Naive thymus-derived CD4-positive, alpha-beta T cell (primary cell): ENCODE measurements at regions of chr5 and their contacts with region 1.

Region 1: DNA sequence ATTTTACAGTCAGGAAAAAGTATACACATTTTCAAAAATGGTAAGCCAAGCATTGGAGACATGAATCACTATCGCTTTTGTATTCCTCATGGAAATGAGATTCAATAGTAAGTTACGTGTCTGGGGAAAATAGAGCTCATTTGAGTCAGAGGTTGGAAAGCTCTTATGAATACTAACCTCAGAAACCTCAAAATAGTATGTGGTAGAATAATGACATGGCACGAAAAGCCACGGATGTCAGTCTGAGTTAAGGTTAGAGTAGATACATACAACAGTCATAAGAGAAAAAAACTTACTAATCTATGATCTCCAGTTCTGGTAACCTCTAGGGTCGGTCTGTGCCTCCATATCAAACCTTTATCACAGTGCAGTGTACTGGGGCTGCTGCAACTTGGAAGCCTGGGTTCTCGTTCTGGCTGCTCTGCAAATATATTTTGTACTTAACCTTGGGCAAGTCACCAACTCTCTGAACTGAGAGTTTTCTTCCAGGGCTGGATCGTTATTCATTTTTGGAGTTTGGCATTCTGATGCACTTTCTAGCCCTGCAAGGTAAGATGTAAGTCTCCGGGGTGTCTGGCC is 31.8 kb downstream of the MAP1B start:
- DNase-seq: no peak
- ATAC-seq: peak; percentile 66
- H3K4me3 ChIP-seq: no peak overlapping the region
- H3K4me3 Mint-ChIP-seq: no peak overlapping the region
- H3K27ac ChIP-seq: no peak overlapping the region
- H3K27ac Mint-ChIP-seq: no peak overlapping the region
- H3K4me1 ChIP-seq: no peaks in the 10 kb centered on the region
- H3K4me1 Mint-ChIP-seq: peaks cover 0 to 10% (median 4%) of the 10 kb centered on the region in 7 donors
- H3K27me3 ChIP-seq: no peaks in the 10 kb centered on the region
- H3K27me3 Mint-ChIP-seq: peaks cover 15 to 61% (median 40%) of the 10 kb centered on the region in 5 donors

Region 2: GRCh38 chr5:72234265-72234700 is 95.3 kb after region 1 on chr5:
- CTCF ChIA-PET with region 1: no interaction called
- POLR2A ChIA-PET with region 1: no interaction called
- intact Hi-C with region 1: loop called in 1 of 2 experiments (anchors 5 kb)
- DNase-seq: peak in 1 of 9 donors; percentile 1
- ATAC-seq: peak; percentile 87
- H3K4me3 ChIP-seq: no peak overlapping the region
- H3K4me3 Mint-ChIP-seq: peak overlapping the region in 2 of 10 donors; percentile 1 to 5
- H3K27ac ChIP-seq: no peak overlapping the region
- H3K27ac Mint-ChIP-seq: peak overlapping the region in 1 of 9 donors; percentile 23
- H3K4me1 ChIP-seq: peaks cover 8 to 32% of the 10 kb centered on the region in 2 donors
- H3K4me1 Mint-ChIP-seq: peaks cover 34 to 61% (median 49%) of the 10 kb centered on the region in 7 donors
- H3K27me3 ChIP-seq: no peaks in the 10 kb centered on the region
- H3K27me3 Mint-ChIP-seq: peaks cover 0 to 16% (median 0%) of the 10 kb centered on the region in 5 donors

Region 3: GRCh38 chr5:72268753-72269410 is 129.8 kb after region 1 on chr5:
- CTCF ChIA-PET with region 1: no interaction called
- POLR2A ChIA-PET with region 1: no interaction called
- intact Hi-C with region 1: loop called (anchors 1 kb)
- DNase-seq: peak in 4 of 9 donors; percentile 2 to 22 (median 12)
- ATAC-seq: peak; percentile 54
- H3K4me3 ChIP-seq: no peak overlapping the region
- H3K4me3 Mint-ChIP-seq: no peak overlapping the region
- H3K27ac ChIP-seq: no peak overlapping the region
- H3K27ac Mint-ChIP-seq: peak overlapping the region in 1 of 9 donors; percentile 3
- H3K4me1 ChIP-seq: no peaks in the 10 kb centered on the region
- H3K4me1 Mint-ChIP-seq: peaks cover 0 to 21% (median 14%) of the 10 kb centered on the region in 7 donors
- H3K27me3 ChIP-seq: no peaks in the 10 kb centered on the region
- H3K27me3 Mint-ChIP-seq: no peaks in the 10 kb centered on the region

Region 4: GRCh38 chr5:72319976-72320752 is 181.1 kb after region 1 on chr5 and contains the starts of genes MRPS27 and PTCD2:
- CTCF ChIA-PET with region 1: no interaction called
- POLR2A ChIA-PET with region 1: no interaction called
- intact Hi-C with region 1: loop called in 1 of 2 experiments (anchors 5 kb)
- DNase-seq: peak; percentile 71 to 96 (median 94)
- ATAC-seq: peak; percentile 100
- H3K4me3 ChIP-seq: peak within 1 kb of the TSS; percentile 93
- H3K4me3 Mint-ChIP-seq: peak within 1 kb of the TSS; percentile 93 to 100 (median 98)
- H3K27ac ChIP-seq: peak within 1 kb of the TSS; percentile 89
- H3K27ac Mint-ChIP-seq: peak within 1 kb of the TSS; percentile 88 to 99 (median 95)
- H3K4me1 ChIP-seq: peaks cover 7 to 14% of the 10 kb centered on the region in 2 donors
- H3K4me1 Mint-ChIP-seq: peaks cover 24 to 65% (median 47%) of the 10 kb centered on the region in 7 donors
- H3K27me3 ChIP-seq: no peaks in the 10 kb centered on the region
- H3K27me3 Mint-ChIP-seq: no peaks in the 10 kb centered on the region
- total RNA-seq, gene MRPS27: 36.6 to 54.0 (median 39.5) TPM
- total RNA-seq, gene PTCD2: 5.0 to 12.6 (median 11.2) TPM